ENCODE measurements at regions of chr3 and their contacts with region 1.

Region 1: GRCh38 chr3:19348929-19349564 is 200.7 kb downstream of the KCNH8 start:
- DNase-seq: no peak
- ATAC-seq: no peak
- H3K4me3 ChIP-seq: no peak overlapping the region
- H3K27ac ChIP-seq: no peak overlapping the region
- H3K4me1 ChIP-seq: no peaks in the 10 kb centered on the region
- H3K27me3 ChIP-seq: no peaks in the 10 kb centered on the region

Region 2: DNA sequence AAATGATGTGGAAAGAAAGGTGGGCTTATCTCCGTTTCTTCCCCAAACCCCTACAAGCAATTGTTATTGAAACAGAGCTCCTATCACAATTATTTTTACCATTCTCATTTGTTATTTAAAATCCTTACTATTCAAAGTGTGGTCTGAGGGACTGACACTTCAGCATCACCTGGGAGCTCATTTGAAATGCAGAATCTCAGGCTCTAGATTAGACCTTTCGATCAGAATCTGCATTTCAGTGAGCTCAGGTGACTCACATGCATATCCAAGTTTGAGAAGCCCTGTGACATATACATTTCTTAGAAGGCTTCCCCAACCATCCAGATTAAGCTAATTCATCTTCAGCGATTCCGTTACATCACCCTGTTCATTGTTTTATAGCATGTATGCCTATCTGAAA is 55.8 kb before region 1 on chr3:
- intact Hi-C with region 1: no loop called
- DNase-seq: no peak
- ATAC-seq: no peak
- H3K4me3 ChIP-seq: no peak overlapping the region
- H3K27ac ChIP-seq: no peak overlapping the region
- H3K4me1 ChIP-seq: no peaks in the 10 kb centered on the region
- H3K27me3 ChIP-seq: no peaks in the 10 kb centered on the region

Region 3: DNA sequence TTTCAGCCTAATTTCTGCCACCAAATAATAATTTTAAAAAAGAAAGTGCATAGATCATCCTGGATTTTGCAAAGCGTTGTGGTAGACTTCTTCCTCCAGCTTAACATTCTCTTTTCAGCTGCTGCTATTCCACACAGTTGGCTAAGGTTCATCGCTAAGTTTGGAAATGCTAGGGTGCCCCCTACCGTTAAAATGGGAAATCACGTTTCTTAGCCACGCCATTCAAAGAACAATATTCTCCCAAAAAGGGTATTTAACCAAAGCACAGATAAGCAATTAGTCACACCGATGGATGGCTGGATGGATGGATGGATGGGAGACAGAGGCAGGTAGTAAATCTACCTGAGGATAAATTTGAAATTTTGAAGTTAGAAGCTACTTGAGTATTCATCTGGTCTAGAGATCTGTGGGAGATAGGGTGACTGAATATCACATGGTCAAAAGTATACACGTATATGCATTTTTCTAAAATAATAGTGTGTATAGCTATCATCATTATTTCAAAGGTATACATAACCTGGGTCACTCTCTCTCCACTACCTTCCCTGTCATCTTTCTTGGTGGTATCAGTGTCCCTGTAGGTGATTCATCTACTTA is 517.8 kb after region 1 on chr3:
- intact Hi-C with region 1: loop called in 1 of 4 experiments (anchors 10 kb)
- DNase-seq: no peak
- ATAC-seq: peak; percentile 22 to 50
- H3K4me3 ChIP-seq: no peak overlapping the region
- H3K27ac ChIP-seq: no peak overlapping the region
- H3K4me1 ChIP-seq: no peaks in the 10 kb centered on the region
- H3K27me3 ChIP-seq: no peaks in the 10 kb centered on the region